GM12878 (cell line): ENCODE measurements at regions of chr16 and their contacts with region 1.

Region 1: GRCh38 chr16:14539631-14540030 is 90.4 kb downstream of the PARN start:
- DNase-seq: no peak
- ATAC-seq: no peak
- H3K4me3 ChIP-seq: no peak overlapping the region
- H3K27ac ChIP-seq: no peak overlapping the region
- H3K4me1 ChIP-seq: no peaks in the 10 kb centered on the region
- H3K27me3 ChIP-seq: no peaks in the 10 kb centered on the region
- CTCF ChIP-seq: no peak
- EP300 ChIP-seq: no peak
- POLR2A ChIP-seq: no peak
- RAD21 ChIP-seq: no peak

Region 2: GRCh38 chr16:14491861-14492529 is 47.6 kb before region 1 on chr16:
- CTCF ChIA-PET with region 1: no interaction called
- POLR2A ChIA-PET with region 1: interaction called, 3 read pairs
- RAD21 ChIA-PET with region 1: no interaction called
- SMC1A ChIA-PET with region 1: no interaction called
- in situ Hi-C with region 1: loop called (anchors 5 kb)
- intact Hi-C with region 1: no loop called
- DNase-seq: no peak
- ATAC-seq: no peak
- H3K4me3 ChIP-seq: no peak overlapping the region
- H3K27ac ChIP-seq: no peak overlapping the region
- H3K4me1 ChIP-seq: peaks cover 7% of the 10 kb centered on the region
- H3K27me3 ChIP-seq: no peaks in the 10 kb centered on the region
- CTCF ChIP-seq: no peak
- EP300 ChIP-seq: no peak
- POLR2A ChIP-seq: no peak
- RAD21 ChIP-seq: no peak

Region 3: GRCh38 chr16:14502932-14503741 is 36.5 kb before region 1 on chr16:
- CTCF ChIA-PET with region 1: no interaction called
- POLR2A ChIA-PET with region 1: no interaction called
- RAD21 ChIA-PET with region 1: no interaction called
- SMC1A ChIA-PET with region 1: no interaction called
- in situ Hi-C with region 1: no loop called
- intact Hi-C with region 1: no loop called
- DNase-seq: peak; percentile 79
- ATAC-seq: peak; percentile 85
- H3K4me3 ChIP-seq: peak overlapping the region; percentile 48; the same call in 1 of the 2 replicates
- H3K27ac ChIP-seq: peak overlapping the region; percentile 75
- H3K4me1 ChIP-seq: peaks cover 56% of the 10 kb centered on the region
- H3K27me3 ChIP-seq: no peaks in the 10 kb centered on the region
- CTCF ChIP-seq: no peak
- EP300 ChIP-seq: peak; percentile 80 to 88; a peak in 3 of 4 replicates
- POLR2A ChIP-seq: no peak
- RAD21 ChIP-seq: 0 out of 2 replicates have a peak, but pooled peaks have one; percentile 0

Region 4: GRCh38 chr16:14586637-14587305 is 47.1 kb after region 1 on chr16:
- CTCF ChIA-PET with region 1: no interaction called
- POLR2A ChIA-PET with region 1: no interaction called
- RAD21 ChIA-PET with region 1: no interaction called
- SMC1A ChIA-PET with region 1: no interaction called
- in situ Hi-C with region 1: no loop called
- intact Hi-C with region 1: no loop called
- DNase-seq: no peak
- ATAC-seq: no peak
- H3K4me3 ChIP-seq: no peak overlapping the region
- H3K27ac ChIP-seq: no peak overlapping the region
- H3K4me1 ChIP-seq: no peaks in the 10 kb centered on the region
- H3K27me3 ChIP-seq: no peaks in the 10 kb centered on the region
- CTCF ChIP-seq: no peak
- EP300 ChIP-seq: no peak
- POLR2A ChIP-seq: no peak
- RAD21 ChIP-seq: no peak